ENCODE measurements at regions of chr15 and their contacts with region 1.

Region 1: GRCh38 chr15:64046347-64047153 is at the start of gene DAPK2:
- DNase-seq: peak; percentile 60
- ATAC-seq: peak; percentile 89
- H3K4me3 Mint-ChIP-seq: peak within 1 kb of the TSS; percentile 66
- H3K27ac Mint-ChIP-seq: peak within 1 kb of the TSS; percentile 8
- H3K4me1 Mint-ChIP-seq: peaks cover 7% of the 10 kb centered on the region
- H3K27me3 Mint-ChIP-seq: peaks cover 11% of the 10 kb centered on the region
- CTCF ChIP-seq: peak; percentile 81
- total RNA-seq, gene DAPK2: 1.2 to 1.5 TPM

Region 2: DNA sequence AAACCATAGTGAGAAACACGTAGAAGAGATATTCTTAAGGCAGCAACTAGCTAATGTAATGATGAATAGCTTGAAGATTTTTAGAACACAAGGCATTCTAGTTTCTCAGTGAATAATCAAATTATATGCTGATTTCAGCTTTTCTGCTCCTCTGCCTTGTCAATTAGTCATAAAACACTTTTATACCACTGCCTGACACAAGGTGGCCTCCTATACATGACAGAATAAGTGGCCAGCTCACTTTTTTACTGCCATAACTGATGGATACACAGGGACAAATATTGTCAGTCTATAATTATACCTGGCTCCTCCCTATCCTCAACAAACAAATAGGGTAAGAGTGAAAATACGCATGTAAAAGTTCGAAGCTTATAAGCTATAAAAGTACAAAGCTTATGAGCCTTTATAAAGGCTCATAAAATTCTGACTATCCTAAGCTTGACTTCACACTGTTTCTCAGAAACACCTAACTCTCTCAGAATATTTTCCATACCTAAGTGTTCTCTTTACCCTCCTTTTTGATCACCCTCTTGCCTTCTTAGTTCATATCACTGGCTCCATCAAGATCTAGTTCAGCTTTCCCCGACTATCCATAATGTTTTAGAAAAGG is 294.4 kb before region 1 on chr15:
- CTCF ChIA-PET with region 1: interaction called, 47 read pairs
- POLR2A ChIA-PET with region 1: no interaction called
- intact Hi-C with region 1: no loop called
- DNase-seq: peak; percentile 60
- ATAC-seq: peak; percentile 94
- H3K4me3 Mint-ChIP-seq: no peak overlapping the region
- H3K27ac Mint-ChIP-seq: peak overlapping the region; percentile 46
- H3K4me1 Mint-ChIP-seq: peaks cover 6% of the 10 kb centered on the region
- H3K27me3 Mint-ChIP-seq: no peaks in the 10 kb centered on the region
- CTCF ChIP-seq: peak; percentile 80

Region 3: GRCh38 chr15:63905558-63906265 is 140.8 kb before region 1 on chr15:
- CTCF ChIA-PET with region 1: interaction called, 11 read pairs
- POLR2A ChIA-PET with region 1: no interaction called
- intact Hi-C with region 1: no loop called
- DNase-seq: no peak
- ATAC-seq: peak; percentile 79
- H3K4me3 Mint-ChIP-seq: no peak overlapping the region
- H3K27ac Mint-ChIP-seq: peak overlapping the region; percentile 69
- H3K4me1 Mint-ChIP-seq: peaks cover 22% of the 10 kb centered on the region
- H3K27me3 Mint-ChIP-seq: no peaks in the 10 kb centered on the region
- CTCF ChIP-seq: no peak

Region 4: GRCh38 chr15:63994073-63994600 is 52.4 kb before region 1 on chr15:
- CTCF ChIA-PET with region 1: interaction called, 11 read pairs
- POLR2A ChIA-PET with region 1: no interaction called
- intact Hi-C with region 1: no loop called
- DNase-seq: no peak
- ATAC-seq: no peak
- H3K4me3 Mint-ChIP-seq: no peak overlapping the region
- H3K27ac Mint-ChIP-seq: no peak overlapping the region
- H3K4me1 Mint-ChIP-seq: peaks cover 22% of the 10 kb centered on the region
- H3K27me3 Mint-ChIP-seq: no peaks in the 10 kb centered on the region
- CTCF ChIP-seq: no peak

Region 5: DNA sequence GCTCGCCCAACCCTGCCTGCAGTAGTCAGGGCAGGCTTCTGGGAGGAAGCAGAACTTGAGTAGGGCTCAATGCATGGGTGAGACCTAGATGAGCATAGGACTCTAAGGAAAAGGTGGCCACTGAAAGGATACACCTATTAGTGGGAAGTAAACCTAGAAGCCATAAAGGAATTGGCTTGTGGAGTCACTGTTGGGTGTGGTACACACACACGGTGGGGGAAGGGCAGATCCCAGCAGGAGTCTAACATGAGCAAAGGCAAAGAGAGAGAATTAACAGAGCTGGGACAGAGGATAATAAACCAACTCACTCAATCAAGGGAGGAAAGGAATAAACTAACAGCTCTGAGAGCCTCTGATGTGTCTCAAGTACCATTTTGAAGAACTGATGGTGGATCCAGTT is 23.3 kb before region 1 on chr15:
- CTCF ChIA-PET with region 1: interaction called, 11 read pairs
- POLR2A ChIA-PET with region 1: interaction called, 4 read pairs
- intact Hi-C with region 1: no loop called
- DNase-seq: no peak
- ATAC-seq: no peak
- H3K4me3 Mint-ChIP-seq: no peak overlapping the region
- H3K27ac Mint-ChIP-seq: no peak overlapping the region
- H3K4me1 Mint-ChIP-seq: peaks cover 2% of the 10 kb centered on the region
- H3K27me3 Mint-ChIP-seq: no peaks in the 10 kb centered on the region
- CTCF ChIP-seq: no peak

Region 6: GRCh38 chr15:64237677-64238076 is 191.1 kb after region 1 on chr15:
- CTCF ChIA-PET with region 1: no interaction called
- POLR2A ChIA-PET with region 1: no interaction called
- intact Hi-C with region 1: no loop called
- DNase-seq: no peak
- ATAC-seq: no peak
- H3K4me3 Mint-ChIP-seq: no peak overlapping the region
- H3K27ac Mint-ChIP-seq: no peak overlapping the region
- H3K4me1 Mint-ChIP-seq: peaks cover 63% of the 10 kb centered on the region
- H3K27me3 Mint-ChIP-seq: no peaks in the 10 kb centered on the region
- CTCF ChIP-seq: no peak